B cell (primary cell): ENCODE measurements at regions of chr6 and their contacts with region 1.

Region 1: DNA sequence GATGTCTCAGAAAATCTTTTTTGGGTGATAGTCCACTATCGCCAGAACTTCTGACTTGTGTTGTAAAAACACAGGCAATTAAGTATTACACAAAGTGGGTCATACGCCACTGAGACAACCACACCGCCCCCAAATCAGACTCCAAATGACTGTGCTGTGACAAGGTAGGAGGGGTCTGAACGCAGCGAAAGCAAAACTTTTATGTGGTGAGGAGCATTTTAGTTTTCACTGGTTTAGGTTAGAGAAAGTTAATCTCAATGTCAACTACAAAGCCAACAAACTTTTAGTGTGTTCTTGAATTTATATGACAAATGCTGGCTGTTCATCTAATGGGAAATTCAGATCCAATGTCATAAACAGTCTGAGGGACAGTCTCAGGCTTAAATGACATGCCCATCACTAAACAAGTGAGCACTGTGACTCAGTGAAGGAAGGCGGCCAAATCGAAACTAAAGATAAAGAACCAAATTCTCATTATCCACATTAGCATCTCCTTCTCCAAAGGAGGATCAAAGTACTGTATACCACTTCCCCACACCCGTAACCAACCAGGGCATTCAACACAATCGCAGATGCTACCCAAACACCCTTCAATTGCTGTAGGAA is 186.7 kb downstream of the GJA10 start:
- DNase-seq: peak; percentile 54
- ATAC-seq: peak; percentile 48
- H3K4me3 ChIP-seq: peak overlapping the region in 4 of 5 experiments; percentile 11 to 48 (median 40)
- H3K4me3 Mint-ChIP-seq: peak overlapping the region; percentile 90
- H3K27ac ChIP-seq: peak overlapping the region; percentile 4 to 52
- H3K27ac Mint-ChIP-seq: peak overlapping the region; percentile 90
- H3K4me1 ChIP-seq: peaks cover 61 to 72% of the 10 kb centered on the region in 2 donors
- H3K4me1 Mint-ChIP-seq: peaks cover 92% of the 10 kb centered on the region
- H3K27me3 ChIP-seq: no peaks in the 10 kb centered on the region
- H3K27me3 Mint-ChIP-seq: no peaks in the 10 kb centered on the region
- CTCF ChIP-seq: no peak

Region 2: GRCh38 chr6:88823998-88824397 is 1257.0 kb before region 1 on chr6:
- CTCF ChIA-PET with region 1: no interaction called
- POLR2A ChIA-PET with region 1: no interaction called
- intact Hi-C with region 1: no loop called
- DNase-seq: no peak
- ATAC-seq: no peak
- H3K4me3 ChIP-seq: no peak overlapping the region
- H3K4me3 Mint-ChIP-seq: no peak overlapping the region
- H3K27ac ChIP-seq: no peak overlapping the region
- H3K27ac Mint-ChIP-seq: no peak overlapping the region
- H3K4me1 ChIP-seq: no peaks in the 10 kb centered on the region
- H3K4me1 Mint-ChIP-seq: peaks cover 15% of the 10 kb centered on the region
- H3K27me3 ChIP-seq: no peaks in the 10 kb centered on the region
- H3K27me3 Mint-ChIP-seq: no peaks in the 10 kb centered on the region
- CTCF ChIP-seq: no peak

Region 3: GRCh38 chr6:90062667-90063066 is 18.3 kb before region 1 on chr6:
- CTCF ChIA-PET with region 1: no interaction called
- POLR2A ChIA-PET with region 1: interaction called, 3 read pairs
- intact Hi-C with region 1: loop called (anchors 2 kb)
- DNase-seq: no peak
- ATAC-seq: no peak
- H3K4me3 ChIP-seq: no peak overlapping the region
- H3K4me3 Mint-ChIP-seq: no peak overlapping the region
- H3K27ac ChIP-seq: peak overlapping the region in 1 of 2 donors; percentile 30
- H3K27ac Mint-ChIP-seq: no peak overlapping the region
- H3K4me1 ChIP-seq: peaks cover 0 to 3% of the 10 kb centered on the region in 2 donors
- H3K4me1 Mint-ChIP-seq: peaks cover 43% of the 10 kb centered on the region
- H3K27me3 ChIP-seq: no peaks in the 10 kb centered on the region
- H3K27me3 Mint-ChIP-seq: no peaks in the 10 kb centered on the region
- CTCF ChIP-seq: no peak

Region 4: DNA sequence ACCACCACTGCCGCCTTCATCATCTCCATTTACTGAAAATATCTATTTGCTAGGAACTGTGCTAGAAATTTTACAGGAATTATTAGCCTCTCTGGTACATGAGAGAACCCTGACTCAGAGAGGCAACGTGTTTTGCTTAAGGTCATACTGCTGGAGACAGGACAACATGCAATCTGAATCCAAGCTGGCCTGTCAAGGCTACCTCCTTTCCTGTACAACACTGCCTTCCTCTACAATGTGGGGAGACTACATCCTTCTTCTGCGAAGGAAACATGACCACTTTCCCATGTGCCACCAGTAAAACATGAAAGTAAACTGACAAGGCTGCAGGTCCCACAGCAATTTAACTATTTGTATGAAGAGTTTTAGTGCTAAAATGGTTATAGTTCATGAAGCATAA is 14.8 kb after region 1 on chr6:
- CTCF ChIA-PET with region 1: no interaction called
- POLR2A ChIA-PET with region 1: no interaction called
- intact Hi-C with region 1: no loop called
- DNase-seq: no peak
- ATAC-seq: no peak
- H3K4me3 ChIP-seq: no peak overlapping the region
- H3K4me3 Mint-ChIP-seq: peak overlapping the region; percentile 8
- H3K27ac ChIP-seq: peak overlapping the region in 1 of 2 donors; percentile 38
- H3K27ac Mint-ChIP-seq: peak overlapping the region; percentile 10
- H3K4me1 ChIP-seq: peaks cover 59 to 72% of the 10 kb centered on the region in 2 donors
- H3K4me1 Mint-ChIP-seq: peaks cover 83% of the 10 kb centered on the region
- H3K27me3 ChIP-seq: no peaks in the 10 kb centered on the region
- H3K27me3 Mint-ChIP-seq: no peaks in the 10 kb centered on the region
- CTCF ChIP-seq: no peak

Region 5: DNA sequence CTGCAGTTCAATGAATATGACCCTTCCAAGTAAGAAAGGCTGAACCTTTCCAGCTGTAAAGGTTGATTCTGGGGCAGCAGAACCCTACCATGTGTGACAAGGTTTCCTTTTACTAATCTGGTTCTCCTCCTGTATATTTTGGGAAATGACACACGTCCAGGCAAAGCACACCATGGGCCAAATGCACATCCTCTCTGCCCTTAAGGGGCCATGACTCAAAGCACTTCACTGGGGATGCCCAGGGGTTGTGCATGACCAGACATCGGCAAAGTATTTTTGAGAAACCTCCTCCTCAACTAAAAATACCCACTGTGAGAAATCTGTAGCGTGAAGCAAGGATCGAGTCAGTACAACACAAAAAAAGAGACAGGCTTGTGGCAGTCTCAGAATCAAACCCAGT is 41.0 kb after region 1 on chr6:
- CTCF ChIA-PET with region 1: no interaction called
- POLR2A ChIA-PET with region 1: no interaction called
- intact Hi-C with region 1: loop called (anchors 5 kb)
- DNase-seq: peak; percentile 44
- ATAC-seq: peak; percentile 81
- H3K4me3 ChIP-seq: no peak overlapping the region
- H3K4me3 Mint-ChIP-seq: peak overlapping the region; percentile 37
- H3K27ac ChIP-seq: peak overlapping the region in 1 of 2 donors; percentile 72
- H3K27ac Mint-ChIP-seq: peak overlapping the region; percentile 77
- H3K4me1 ChIP-seq: peaks cover 47 to 51% of the 10 kb centered on the region in 2 donors
- H3K4me1 Mint-ChIP-seq: peaks cover 68% of the 10 kb centered on the region
- H3K27me3 ChIP-seq: no peaks in the 10 kb centered on the region
- H3K27me3 Mint-ChIP-seq: no peaks in the 10 kb centered on the region
- CTCF ChIP-seq: no peak

Region 6: DNA sequence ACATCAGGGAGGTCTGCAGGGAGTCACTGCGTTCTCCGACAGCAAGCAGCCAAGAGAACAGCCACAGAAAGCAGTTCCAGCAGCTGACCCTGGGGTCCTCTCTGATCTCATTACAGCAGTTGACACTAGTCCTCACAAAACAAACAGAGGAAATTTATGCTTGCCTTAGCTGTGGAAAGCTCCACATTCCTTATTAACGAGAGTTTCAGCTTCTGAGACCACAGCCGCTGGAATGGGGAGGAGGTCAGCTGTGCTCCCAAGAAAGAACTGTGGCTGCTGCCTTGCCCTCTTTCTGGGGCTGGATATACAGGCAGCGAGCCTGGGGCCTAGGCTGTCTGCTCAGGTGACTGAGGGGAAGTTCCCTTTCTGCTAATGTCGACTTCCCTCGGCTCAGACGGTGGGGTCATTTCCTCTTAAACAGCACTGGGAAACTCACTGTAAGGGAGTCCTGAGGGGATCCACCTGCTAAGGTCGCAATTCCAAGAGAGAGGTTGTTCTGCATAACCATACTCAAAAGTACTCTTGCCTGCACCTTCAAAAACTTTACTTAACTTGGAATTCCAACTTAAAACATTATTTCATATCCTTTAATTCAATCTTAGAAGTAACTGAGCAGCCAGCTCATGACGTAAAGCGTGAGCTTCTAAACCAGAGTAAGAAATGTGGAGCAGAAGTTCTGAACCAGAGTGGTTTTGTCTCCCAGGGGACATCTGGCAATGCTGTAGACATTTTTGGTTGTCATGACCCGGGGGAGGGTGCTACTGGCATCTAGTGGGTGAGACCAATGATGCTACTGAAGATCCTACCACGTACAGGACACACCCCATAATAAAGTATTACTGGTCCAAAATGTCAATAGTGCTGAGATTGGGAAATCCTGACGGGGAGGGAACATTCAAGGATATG is 135.3 kb after region 1 on chr6:
- CTCF ChIA-PET with region 1: interaction called, 13 read pairs
- POLR2A ChIA-PET with region 1: interaction called, 4 read pairs
- intact Hi-C with region 1: loop called (anchors 1 kb)
- DNase-seq: peak; percentile 95
- ATAC-seq: peak; percentile 84
- H3K4me3 ChIP-seq: no peak overlapping the region
- H3K4me3 Mint-ChIP-seq: peak overlapping the region; percentile 73
- H3K27ac ChIP-seq: peak overlapping the region; percentile 85 to 96
- H3K27ac Mint-ChIP-seq: no peak overlapping the region
- H3K4me1 ChIP-seq: peaks cover 83 to 84% of the 10 kb centered on the region in 2 donors
- H3K4me1 Mint-ChIP-seq: peaks cover 28% of the 10 kb centered on the region
- H3K27me3 ChIP-seq: no peaks in the 10 kb centered on the region
- H3K27me3 Mint-ChIP-seq: no peaks in the 10 kb centered on the region
- CTCF ChIP-seq: peak; percentile 63

Region 7: GRCh38 chr6:90375681-90376439 is 294.9 kb after region 1 on chr6:
- CTCF ChIA-PET with region 1: no interaction called
- POLR2A ChIA-PET with region 1: no interaction called
- intact Hi-C with region 1: loop called (anchors 5 kb)
- DNase-seq: peak; percentile 95
- ATAC-seq: peak; percentile 95
- H3K4me3 ChIP-seq: peak overlapping the region in 4 of 5 experiments; percentile 16 to 48 (median 29)
- H3K4me3 Mint-ChIP-seq: peak overlapping the region; percentile 79
- H3K27ac ChIP-seq: peak overlapping the region; percentile 94 to 98
- H3K27ac Mint-ChIP-seq: peak overlapping the region; percentile 96
- H3K4me1 ChIP-seq: peaks cover 39 to 45% of the 10 kb centered on the region in 2 donors
- H3K4me1 Mint-ChIP-seq: peaks cover 64% of the 10 kb centered on the region
- H3K27me3 ChIP-seq: no peaks in the 10 kb centered on the region
- H3K27me3 Mint-ChIP-seq: no peaks in the 10 kb centered on the region
- CTCF ChIP-seq: no peak